CD4-positive, alpha-beta T cell (primary cell): ENCODE measurements at regions of chr16 and their contacts with region 1.

Region 1: GRCh38 chr16:22098405-22099255 is 6.3 kb downstream of the VWA3A start:
- DNase-seq: peak in 3 of 14 experiments; percentile 42 to 66 (median 60)
- ATAC-seq: peak; percentile 72
- H3K4me3 ChIP-seq: no peak overlapping the region
- H3K4me3 Mint-ChIP-seq: no peak overlapping the region
- H3K27ac ChIP-seq: no peak overlapping the region
- H3K27ac Mint-ChIP-seq: no peak overlapping the region
- H3K4me1 ChIP-seq: no peaks in the 10 kb centered on the region
- H3K4me1 Mint-ChIP-seq: no peaks in the 10 kb centered on the region
- H3K27me3 ChIP-seq: peaks cover 3 to 5% of the 10 kb centered on the region in 2 experiments
- H3K27me3 Mint-ChIP-seq: peaks cover 36% of the 10 kb centered on the region
- CTCF ChIP-seq: peak; percentile 65

Region 2: GRCh38 chr16:20806168-20807050 is 1292.2 kb before region 1 on chr16 and contains the starts of genes ERI2 and REXO5:
- CTCF ChIA-PET with region 1: no interaction called
- POLR2A ChIA-PET with region 1: no interaction called
- intact Hi-C with region 1: no loop called
- DNase-seq: peak; percentile 49 to 87 (median 62)
- ATAC-seq: peak; percentile 88
- H3K4me3 ChIP-seq: peak within 1 kb of the TSS; percentile 92
- H3K4me3 Mint-ChIP-seq: peak within 1 kb of the TSS; percentile 98
- H3K27ac ChIP-seq: peak within 1 kb of the TSS; percentile 49 to 72
- H3K27ac Mint-ChIP-seq: peak within 1 kb of the TSS; percentile 81
- H3K4me1 ChIP-seq: peaks cover 23% of the 10 kb centered on the region
- H3K4me1 Mint-ChIP-seq: peaks cover 17% of the 10 kb centered on the region
- H3K27me3 ChIP-seq: no peaks in the 10 kb centered on the region
- H3K27me3 Mint-ChIP-seq: no peaks in the 10 kb centered on the region
- CTCF ChIP-seq: peak; percentile 33
- total RNA-seq, gene ERI2: 0.25 to 0.45 TPM
- total RNA-seq, gene REXO5: 0.56 TPM in 1 of 2 experiments, not detected in the other

Region 3: DNA sequence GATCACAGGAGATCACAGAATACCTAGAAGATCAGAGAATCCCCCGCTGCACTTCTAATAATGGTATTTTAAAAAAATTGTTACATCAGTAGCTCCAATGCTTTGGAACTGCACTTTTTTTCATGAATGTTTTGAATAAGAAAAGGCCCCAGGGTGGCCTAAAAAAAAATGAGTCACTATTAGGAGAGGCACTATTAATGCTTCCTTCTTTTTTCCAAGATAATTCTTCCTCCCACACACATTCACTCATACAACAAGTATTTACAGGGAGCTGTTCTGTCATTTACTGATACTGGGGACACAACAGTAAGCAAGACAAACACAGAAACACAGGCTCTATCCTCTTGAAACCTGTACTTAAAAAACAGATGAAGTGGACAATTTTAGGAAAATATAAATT is 97.0 kb before region 1 on chr16:
- CTCF ChIA-PET with region 1: no interaction called
- POLR2A ChIA-PET with region 1: no interaction called
- intact Hi-C with region 1: loop called in 1 of 2 experiments (anchors 5 kb)
- DNase-seq: no peak
- ATAC-seq: no peak
- H3K4me3 ChIP-seq: no peak overlapping the region
- H3K4me3 Mint-ChIP-seq: no peak overlapping the region
- H3K27ac ChIP-seq: no peak overlapping the region
- H3K27ac Mint-ChIP-seq: no peak overlapping the region
- H3K4me1 ChIP-seq: peaks cover 9% of the 10 kb centered on the region
- H3K4me1 Mint-ChIP-seq: peaks cover 15% of the 10 kb centered on the region
- H3K27me3 ChIP-seq: no peaks in the 10 kb centered on the region
- H3K27me3 Mint-ChIP-seq: no peaks in the 10 kb centered on the region
- CTCF ChIP-seq: no peak

Region 4: DNA sequence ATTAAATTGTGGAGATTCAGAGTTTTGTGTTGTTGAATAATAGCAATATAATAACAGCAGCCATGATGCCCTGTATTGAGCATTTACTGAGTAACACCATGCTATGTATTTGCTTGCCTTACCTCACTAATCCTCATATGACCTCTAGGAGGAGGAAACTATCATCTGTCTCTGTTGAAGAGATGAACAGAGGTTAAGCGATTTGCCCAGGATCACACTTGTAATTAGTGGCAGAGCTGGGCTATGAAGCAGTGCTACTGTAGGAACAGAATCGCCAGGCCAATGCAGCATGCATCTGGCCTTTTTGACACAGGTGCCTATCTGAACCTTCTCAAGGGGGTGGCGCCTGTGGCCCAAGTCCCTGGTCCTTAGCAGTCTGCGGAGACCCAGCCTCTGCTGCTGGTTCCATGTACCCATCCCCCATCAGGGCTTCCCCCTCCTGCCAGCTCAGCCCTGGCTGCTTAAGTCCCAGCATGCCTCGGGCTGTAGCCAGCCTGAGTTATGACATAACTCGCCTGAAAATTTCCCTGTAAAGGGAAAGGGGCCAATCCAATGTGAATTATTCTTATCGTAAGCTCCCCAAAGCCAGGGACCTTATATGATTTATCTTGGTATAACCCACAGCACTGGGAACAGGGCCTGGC is 664.9 kb after region 1 on chr16:
- CTCF ChIA-PET with region 1: no interaction called
- POLR2A ChIA-PET with region 1: no interaction called
- intact Hi-C with region 1: no loop called
- DNase-seq: peak in 1 of 14 experiments; percentile 7
- ATAC-seq: no peak
- H3K4me3 ChIP-seq: no peak overlapping the region
- H3K4me3 Mint-ChIP-seq: no peak overlapping the region
- H3K27ac ChIP-seq: no peak overlapping the region
- H3K27ac Mint-ChIP-seq: no peak overlapping the region
- H3K4me1 ChIP-seq: no peaks in the 10 kb centered on the region
- H3K4me1 Mint-ChIP-seq: no peaks in the 10 kb centered on the region
- H3K27me3 ChIP-seq: peaks cover 0 to 4% of the 10 kb centered on the region in 2 experiments
- H3K27me3 Mint-ChIP-seq: peaks cover 22% of the 10 kb centered on the region
- CTCF ChIP-seq: no peak